ENCODE measurements at regions of chr15 and their contacts with region 1.

Region 1: GRCh38 chr15:84929744-84930371 is 45.4 kb downstream of the SLC28A1 start:
- DNase-seq: no peak
- ATAC-seq: peak in 1 of 4 donors; percentile 2
- H3K4me3 ChIP-seq: no peak overlapping the region
- H3K27ac ChIP-seq: no peak overlapping the region
- H3K4me1 ChIP-seq: peaks cover 0 to 15% (median 8%) of the 10 kb centered on the region in 12 donors
- H3K27me3 ChIP-seq: no peaks in the 10 kb centered on the region
- CTCF ChIP-seq: no peak
- POLR2A ChIP-seq: no peak

Region 2: GRCh38 chr15:84594617-84595290 is 335.1 kb before region 1 on chr15:
- intact Hi-C with region 1: loop called in 9 of 10 experiments (anchors 2 to 10 kb)
- DNase-seq: peak in 1 of 5 donors; percentile 36
- ATAC-seq: no peak
- H3K4me3 ChIP-seq: no peak overlapping the region
- H3K27ac ChIP-seq: no peak overlapping the region
- H3K4me1 ChIP-seq: peaks cover 0 to 45% (median 0%) of the 10 kb centered on the region in 12 donors
- H3K27me3 ChIP-seq: no peaks in the 10 kb centered on the region
- CTCF ChIP-seq: no peak
- POLR2A ChIP-seq: no peak

Region 3: DNA sequence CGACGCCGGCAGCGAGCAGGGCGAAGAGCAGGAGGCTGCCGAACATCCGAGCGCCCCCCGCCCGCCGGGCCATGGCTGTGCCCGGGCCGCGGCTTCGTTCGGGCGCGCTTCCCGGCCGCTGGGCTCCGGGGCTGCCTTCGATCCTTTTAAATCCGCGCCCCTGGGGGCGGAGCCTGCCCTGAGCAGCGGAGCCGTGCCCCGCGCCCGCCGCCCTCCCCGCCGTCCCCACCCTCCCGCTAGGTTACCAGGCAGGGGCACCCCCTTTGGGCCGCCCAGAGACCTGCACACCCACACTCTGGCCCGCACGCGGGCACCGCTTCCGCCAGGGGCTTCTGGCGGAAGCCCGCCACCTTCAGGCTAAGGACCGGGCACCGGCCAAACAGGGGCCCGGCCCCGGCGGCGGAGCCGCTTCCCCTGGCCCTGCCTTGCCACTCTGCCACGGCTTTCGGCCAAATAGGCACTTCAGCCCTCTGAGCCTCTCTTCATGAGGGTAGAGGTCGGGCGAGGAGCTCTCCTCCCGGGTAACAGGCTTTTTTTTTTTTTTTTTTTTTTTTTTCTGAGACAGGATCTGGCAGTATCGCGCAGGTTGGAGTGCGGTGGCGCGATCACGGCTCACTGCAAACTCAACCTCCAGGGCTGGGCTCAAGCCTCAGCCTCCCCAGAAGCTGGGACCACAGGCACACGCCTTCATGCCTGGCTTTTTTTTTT is 271.6 kb before region 1 on chr15 and contains the start of gene NMB:
- intact Hi-C with region 1: loop called in 4 of 10 experiments (anchors 5 to 10 kb)
- DNase-seq: peak; percentile 78 to 88 (median 83)
- ATAC-seq: peak; percentile 36 to 72 (median 66)
- H3K4me3 ChIP-seq: peak within 1 kb of the TSS; percentile 6 to 87 (median 70)
- H3K27ac ChIP-seq: peak within 1 kb of the TSS; percentile 16 to 90 (median 78)
- H3K4me1 ChIP-seq: peaks cover 0 to 40% (median 20%) of the 10 kb centered on the region in 12 donors
- H3K27me3 ChIP-seq: no peaks in the 10 kb centered on the region
- CTCF ChIP-seq: peak; percentile 32 to 84 (median 52)
- POLR2A ChIP-seq: peak in 1 of 2 donors; percentile 49
- total RNA-seq, gene NMB: 1.4 to 8.6 (median 2.8) TPM

Region 4: DNA sequence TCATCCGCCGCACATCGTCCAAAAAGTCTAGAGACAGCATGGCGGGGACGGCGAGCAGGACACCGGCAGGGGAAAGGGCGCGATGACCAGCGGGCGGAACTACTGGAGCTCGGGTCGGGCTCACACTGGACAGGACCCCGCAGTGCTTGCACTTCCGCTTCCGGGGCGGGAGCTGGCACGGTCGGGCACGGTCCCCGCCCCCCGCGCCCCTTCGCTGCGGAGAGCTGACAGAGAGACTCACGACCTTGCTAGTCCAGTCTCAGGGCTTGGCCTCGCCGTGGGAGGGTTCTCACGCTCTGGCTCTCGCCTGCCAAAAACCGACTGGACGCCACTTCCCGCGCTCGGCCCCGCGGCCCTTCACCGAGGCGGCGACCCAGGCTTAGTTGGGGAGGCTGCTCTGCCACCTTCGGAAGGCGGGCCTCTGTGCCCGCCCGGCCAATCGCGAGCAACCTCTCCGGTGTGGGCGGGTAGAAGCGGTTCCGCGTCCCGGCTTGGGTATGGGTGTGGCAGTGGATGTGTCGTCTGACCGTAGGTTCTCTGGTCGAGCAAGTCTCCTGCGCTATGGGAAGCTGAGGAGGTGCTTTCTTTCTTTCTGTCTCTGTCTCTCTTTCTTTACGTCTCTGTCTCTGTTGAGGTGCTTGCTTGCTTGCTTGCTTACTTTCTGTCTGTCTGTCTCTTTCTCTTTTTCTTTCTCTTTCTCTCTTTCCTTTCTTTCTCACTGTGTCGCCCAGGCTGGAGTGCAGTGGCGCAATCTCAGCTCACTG is 213.6 kb before region 1 on chr15 and contains the start of gene SEC11A:
- intact Hi-C with region 1: loop called in 1 of 10 experiments (anchors 10 kb)
- DNase-seq: peak; percentile 95 to 98 (median 96)
- ATAC-seq: peak; percentile 98 to 99 (median 98)
- H3K4me3 ChIP-seq: peak within 1 kb of the TSS; percentile 58 to 98 (median 82)
- H3K27ac ChIP-seq: peak within 1 kb of the TSS; percentile 86 to 99 (median 94)
- H3K4me1 ChIP-seq: peaks cover 8 to 52% (median 25%) of the 10 kb centered on the region in 12 donors
- H3K27me3 ChIP-seq: no peaks in the 10 kb centered on the region
- CTCF ChIP-seq: no peak
- POLR2A ChIP-seq: peak in 1 of 2 donors; percentile 76
- total RNA-seq, gene SEC11A: 55.7 to 95.7 (median 73.0) TPM

Region 5: DNA sequence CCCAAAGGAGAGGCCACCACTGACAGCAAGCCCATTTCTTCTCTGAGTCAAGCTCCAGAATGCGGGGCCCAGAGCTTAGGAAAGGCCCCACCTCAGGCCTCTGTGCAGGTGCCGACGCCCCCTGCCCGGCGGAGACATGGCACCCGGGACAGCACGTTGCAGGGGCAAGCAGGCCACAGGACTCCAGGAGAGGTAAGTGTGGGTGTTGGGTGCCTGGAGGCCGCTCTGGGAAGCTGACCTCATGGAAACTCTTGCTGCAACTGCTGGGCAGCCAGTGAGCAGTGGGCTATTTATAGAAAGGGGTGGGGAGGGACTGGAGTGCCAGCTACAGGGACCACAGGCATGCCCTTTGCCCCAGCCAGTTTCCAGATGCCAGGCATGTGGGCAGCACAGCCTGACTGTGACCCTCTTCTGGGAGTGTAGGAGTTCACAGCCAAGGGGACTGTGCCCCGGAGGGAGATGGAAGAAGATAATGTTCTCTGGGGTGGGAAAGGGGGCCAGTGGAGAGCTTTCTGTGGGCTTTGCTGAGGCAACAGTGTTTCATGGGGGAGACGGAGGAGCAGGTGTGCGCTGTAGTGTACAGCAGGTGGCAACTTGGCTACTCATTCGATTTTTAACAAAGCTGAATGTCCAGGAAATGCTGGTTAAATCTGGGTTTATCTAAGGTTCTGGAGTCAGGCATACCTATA is 89.0 kb before region 1 on chr15:
- intact Hi-C with region 1: loop called in 7 of 10 experiments (anchors 1 to 5 kb)
- DNase-seq: peak; percentile 77 to 92 (median 87)
- ATAC-seq: peak; percentile 74 to 88 (median 86)
- H3K4me3 ChIP-seq: peak overlapping the region in 5 of 12 donors; percentile 2 to 15 (median 6)
- H3K27ac ChIP-seq: peak overlapping the region; percentile 85 to 99 (median 96)
- H3K4me1 ChIP-seq: peaks cover 0 to 85% (median 44%) of the 10 kb centered on the region in 12 donors
- H3K27me3 ChIP-seq: no peaks in the 10 kb centered on the region
- CTCF ChIP-seq: no peak
- POLR2A ChIP-seq: peak in 1 of 2 donors; percentile 77

Region 6: GRCh38 chr15:84871428-84872305 is 58.2 kb before region 1 on chr15:
- intact Hi-C with region 1: loop called in 1 of 10 experiments (anchors 5 kb)
- DNase-seq: no peak
- ATAC-seq: peak; percentile 13 to 21 (median 15)
- H3K4me3 ChIP-seq: no peak overlapping the region
- H3K27ac ChIP-seq: peak overlapping the region in 1 of 12 donors; percentile 17
- H3K4me1 ChIP-seq: peaks cover 0 to 12% (median 0%) of the 10 kb centered on the region in 12 donors
- H3K27me3 ChIP-seq: no peaks in the 10 kb centered on the region
- CTCF ChIP-seq: peak in 3 of 12 donors; percentile 4 to 16 (median 16)
- POLR2A ChIP-seq: no peak

Region 7: DNA sequence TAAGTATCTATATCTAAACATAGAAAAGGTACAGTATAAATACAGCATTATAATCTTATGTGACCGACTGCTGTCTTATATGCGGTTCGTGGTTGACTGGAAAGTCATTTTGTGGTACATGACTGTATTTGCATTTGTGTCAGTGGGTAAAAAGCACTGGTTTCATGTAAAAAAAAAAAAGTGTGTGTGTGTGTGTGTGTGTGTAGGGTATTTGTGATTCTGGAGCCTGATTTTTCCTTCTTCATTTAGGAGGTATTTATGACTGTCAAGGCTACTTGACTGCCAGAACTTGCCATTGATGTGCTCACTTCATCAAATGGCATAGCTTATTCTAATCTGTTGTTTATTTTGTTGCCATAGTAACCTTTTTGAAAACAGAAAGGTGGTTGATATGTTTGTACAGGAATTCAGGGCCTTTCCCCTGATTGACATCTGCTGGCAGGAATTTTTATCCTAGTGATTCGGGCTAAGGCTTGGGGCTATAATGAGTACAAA is 513.8 kb after region 1 on chr15:
- intact Hi-C with region 1: no loop called
- DNase-seq: peak in 1 of 5 donors; percentile 23
- ATAC-seq: peak; percentile 49 to 77 (median 68)
- H3K4me3 ChIP-seq: no peak overlapping the region
- H3K27ac ChIP-seq: peak overlapping the region; percentile 2 to 68 (median 40)
- H3K4me1 ChIP-seq: peaks cover 4 to 61% (median 42%) of the 10 kb centered on the region in 12 donors
- H3K27me3 ChIP-seq: no peaks in the 10 kb centered on the region
- CTCF ChIP-seq: peak in 1 of 12 donors; percentile 6
- POLR2A ChIP-seq: no peak

Measured in heart left ventricle (tissue), 16 donors.